ENCODE measurements at regions of chr7 and their contacts with region 1.

Region 1: GRCh38 chr7:98475352-98475751 is 74.5 kb upstream of the BAIAP2L1 start:
- DNase-seq: no peak
- H3K4me3 ChIP-seq: no peak overlapping the region
- H3K27ac ChIP-seq: no peak overlapping the region
- H3K4me1 ChIP-seq: peaks cover 0 to 7% (median 4%) of the 10 kb centered on the region in 4 donors
- H3K27me3 ChIP-seq: peaks cover 0 to 24% of the 10 kb centered on the region in 2 donors
- CTCF ChIP-seq: no peak

Region 2: GRCh38 chr7:97215556-97215955 is 1259.8 kb before region 1 on chr7:
- intact Hi-C with region 1: loop called (anchors 5 kb)
- DNase-seq: no peak
- H3K4me3 ChIP-seq: no peak overlapping the region
- H3K27ac ChIP-seq: no peak overlapping the region
- H3K4me1 ChIP-seq: no peaks in the 10 kb centered on the region
- H3K27me3 ChIP-seq: no peaks in the 10 kb centered on the region
- CTCF ChIP-seq: no peak

Region 3: DNA sequence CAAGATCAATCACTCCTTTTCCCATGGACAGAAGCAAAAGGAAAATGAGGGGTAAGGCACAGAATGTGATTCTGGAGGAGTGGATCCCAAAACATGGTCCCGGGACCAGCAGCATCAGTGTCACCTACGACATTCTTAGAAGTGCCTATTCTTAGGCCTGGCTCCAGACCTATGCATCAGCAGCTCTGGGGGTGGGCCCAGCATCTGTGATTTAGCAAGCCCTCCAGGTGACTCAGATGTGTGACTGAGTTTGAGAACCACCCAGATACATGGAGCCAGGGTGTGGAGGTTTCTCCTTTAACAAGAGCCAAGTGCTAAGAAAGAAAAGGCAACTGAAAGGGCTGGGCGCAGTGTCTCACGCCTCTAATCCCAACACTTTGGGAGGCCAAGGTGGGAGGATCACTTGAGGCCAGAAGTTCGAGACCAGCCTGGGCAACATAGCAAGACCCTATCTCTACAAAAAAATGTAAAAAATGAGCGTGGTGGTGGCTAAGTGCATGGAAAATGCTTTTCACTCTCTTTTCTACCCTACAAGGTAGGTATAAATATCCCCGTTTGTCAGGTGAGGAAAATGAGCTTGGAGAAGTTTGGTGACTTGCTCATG is 833.2 kb after region 1 on chr7:
- intact Hi-C with region 1: no loop called
- DNase-seq: peak in 1 of 2 donors; percentile 16
- H3K4me3 ChIP-seq: no peak overlapping the region
- H3K27ac ChIP-seq: no peak overlapping the region
- H3K4me1 ChIP-seq: peaks cover 0 to 22% (median 12%) of the 10 kb centered on the region in 4 donors
- H3K27me3 ChIP-seq: no peaks in the 10 kb centered on the region
- CTCF ChIP-seq: no peak

Measured in tibial artery (tissue), 4 donors.